ENCODE measurements at regions of chr10 and their contacts with region 1.

Region 1: GRCh38 chr10:28179006-28179742 is 123.7 kb downstream of the MPP7 start:
- DNase-seq: no peak

Region 2: GRCh38 chr10:27742195-27743011 is 436.8 kb before region 1 on chr10:
- intact Hi-C with region 1: loop called (anchors 2 kb)
- DNase-seq: peak; percentile 84

Measured in cardiac septum (tissue), 1 donor.